Right cardiac atrium (tissue), 5 donors: ENCODE measurements at regions of chr7 and their contacts with region 1.

Region 1: GRCh38 chr7:138981332-138982203 is at the start of gene KIAA1549:
- DNase-seq: peak; percentile 67 to 87 (median 86)
- ATAC-seq: peak; percentile 91 to 96
- H3K4me3 ChIP-seq: peak within 1 kb of the TSS; percentile 100
- H3K27ac ChIP-seq: no peak within 1 kb of the TSS
- H3K4me1 ChIP-seq: peaks cover 5% of the 10 kb centered on the region
- H3K27me3 ChIP-seq: no peaks in the 10 kb centered on the region
- total RNA-seq, gene KIAA1549: 0.86 to 1.9 (median 1.6) TPM

Region 2: DNA sequence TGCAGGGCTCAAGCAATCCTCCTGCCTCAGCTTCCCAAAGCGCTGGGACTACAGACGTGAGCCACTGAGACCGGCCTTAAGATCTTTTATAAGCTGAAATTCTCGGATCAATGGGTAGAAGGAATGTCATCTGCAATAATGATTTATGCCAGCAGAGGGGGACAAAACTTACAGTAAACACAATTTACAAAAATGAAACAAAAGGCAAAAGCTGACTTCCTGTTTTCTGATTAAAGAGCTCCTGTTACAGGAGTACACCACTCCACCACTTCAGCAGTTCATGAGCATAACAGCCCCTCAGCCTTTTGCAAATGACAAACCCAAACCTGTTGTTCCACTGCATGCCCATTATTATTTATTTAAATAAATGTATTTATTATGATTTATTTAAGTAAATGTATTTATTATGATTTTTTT is 95.1 kb before region 1 on chr7:
- intact Hi-C with region 1: loop called in 2 of 4 experiments (anchors 5 to 10 kb)
- DNase-seq: no peak
- ATAC-seq: no peak
- H3K4me3 ChIP-seq: no peak overlapping the region
- H3K27ac ChIP-seq: no peak overlapping the region
- H3K4me1 ChIP-seq: peaks cover 2% of the 10 kb centered on the region
- H3K27me3 ChIP-seq: no peaks in the 10 kb centered on the region

Region 3: GRCh38 chr7:138898255-138898654 is 83.3 kb before region 1 on chr7:
- intact Hi-C with region 1: no loop called
- DNase-seq: no peak
- ATAC-seq: peak in 1 of 2 donors; percentile 54
- H3K4me3 ChIP-seq: no peak overlapping the region
- H3K27ac ChIP-seq: no peak overlapping the region
- H3K4me1 ChIP-seq: no peaks in the 10 kb centered on the region
- H3K27me3 ChIP-seq: no peaks in the 10 kb centered on the region